Transverse colon (tissue), 4 donors: ENCODE measurements at regions of chr22 and their contacts with region 1.

Region 1: DNA sequence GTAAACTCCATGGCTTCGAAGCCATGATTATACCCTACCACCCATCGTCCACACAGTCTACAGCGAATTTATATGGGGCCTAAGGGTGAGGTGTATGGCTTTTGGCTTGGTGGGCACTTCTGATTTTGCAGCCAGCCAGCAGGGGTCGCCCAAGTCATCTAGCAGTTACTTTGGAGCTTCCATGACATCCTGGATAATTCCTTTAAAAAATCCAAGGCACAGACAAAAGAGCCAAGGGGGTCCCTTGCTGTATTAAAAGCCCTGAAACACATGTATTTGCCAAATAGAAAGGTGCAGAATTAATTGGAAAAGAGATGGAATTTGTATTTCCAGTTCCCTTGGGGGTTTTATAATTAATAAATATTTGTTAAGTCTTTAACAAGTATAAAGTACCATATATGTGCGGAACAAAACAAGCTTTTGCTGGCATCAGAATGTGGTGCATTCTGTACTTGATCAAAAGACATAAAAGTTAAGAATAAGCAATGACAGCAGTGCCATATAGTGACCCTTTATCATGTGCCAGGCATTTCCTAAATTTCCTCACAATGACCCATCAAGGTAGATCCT is 132.8 kb upstream of the PITPNB start:
- DNase-seq: peak; percentile 67
- H3K4me3 ChIP-seq: no peak overlapping the region
- H3K27ac ChIP-seq: no peak overlapping the region
- H3K4me1 ChIP-seq: no peaks in the 10 kb centered on the region
- H3K27me3 ChIP-seq: no peaks in the 10 kb centered on the region
- CTCF ChIP-seq: peak; percentile 78 to 81 (median 80)
- EP300 ChIP-seq: no peak
- POLR2A ChIP-seq: no peak

Region 2: DNA sequence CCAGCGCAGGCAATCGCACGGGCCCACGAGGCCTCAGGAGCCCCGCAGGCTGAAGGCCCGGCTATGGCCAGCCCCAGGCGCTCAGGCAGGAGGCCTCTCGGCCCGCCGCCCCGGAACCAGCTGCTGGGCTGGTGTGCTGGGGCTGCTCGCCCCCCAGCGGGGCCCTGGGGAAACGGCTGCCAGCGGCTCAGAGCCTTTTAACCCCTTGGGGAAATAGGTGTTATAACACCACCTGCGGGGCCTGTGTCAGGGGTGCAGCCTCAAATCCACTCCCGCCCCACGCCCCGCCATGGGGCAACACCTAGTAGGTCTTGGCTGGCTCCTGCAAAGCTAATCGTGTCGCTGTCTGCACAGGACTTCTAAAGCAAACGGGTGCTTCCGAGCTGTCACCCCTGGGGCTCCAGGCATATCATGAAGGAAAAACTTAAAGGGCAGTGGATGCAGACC is 390.4 kb after region 1 on chr22:
- in situ Hi-C with region 1: loop called in 1 of 4 experiments (anchors 25 kb)
- intact Hi-C with region 1: loop called (anchors 10 kb)
- DNase-seq: peak; percentile 78
- H3K4me3 ChIP-seq: peak overlapping the region; percentile 31 to 61 (median 40)
- H3K27ac ChIP-seq: peak overlapping the region; percentile 81 to 86 (median 84)
- H3K4me1 ChIP-seq: peaks cover 0 to 35% (median 12%) of the 10 kb centered on the region in 4 donors
- H3K27me3 ChIP-seq: no peaks in the 10 kb centered on the region
- CTCF ChIP-seq: peak; percentile 54 to 79 (median 70)
- EP300 ChIP-seq: no peak
- POLR2A ChIP-seq: no peak